Motor neuron (in vitro differentiated cells): ENCODE measurements at regions of chr11 and their contacts with region 1.

Region 1: GRCh38 chr11:101848262-101848661 is 66.5 kb upstream of the CEP126 start:
- ATAC-seq: no peak
- H3K4me3 ChIP-seq: no peak overlapping the region
- H3K27ac ChIP-seq: no peak overlapping the region
- H3K4me1 ChIP-seq: no peaks in the 10 kb centered on the region

Region 2: DNA sequence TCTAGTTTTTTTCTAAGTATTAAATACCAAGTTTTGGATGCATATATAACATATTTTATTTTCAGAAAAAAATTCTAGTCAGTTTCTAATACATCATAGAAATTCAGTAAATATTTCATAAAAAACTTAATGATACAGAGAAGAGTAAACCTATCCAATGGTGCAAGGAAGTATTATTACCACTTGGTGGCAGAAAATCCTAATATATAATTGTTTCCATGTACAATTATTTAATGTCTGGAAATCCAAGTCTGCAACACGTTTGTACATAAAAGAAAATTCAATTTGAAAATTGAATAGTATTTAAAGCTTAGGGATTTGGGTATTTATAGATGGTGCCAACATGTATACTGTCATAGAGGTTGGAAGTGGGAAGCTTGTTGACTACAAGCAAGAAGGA is 391.4 kb before region 1 on chr11:
- in situ Hi-C with region 1: loop called in 3 of 9 experiments (anchors 10 kb)
- ATAC-seq: peak in 3 of 8 experiments; percentile 45 to 72 (median 59)
- H3K4me3 ChIP-seq: no peak overlapping the region
- H3K27ac ChIP-seq: no peak overlapping the region
- H3K4me1 ChIP-seq: no peaks in the 10 kb centered on the region

Region 3: DNA sequence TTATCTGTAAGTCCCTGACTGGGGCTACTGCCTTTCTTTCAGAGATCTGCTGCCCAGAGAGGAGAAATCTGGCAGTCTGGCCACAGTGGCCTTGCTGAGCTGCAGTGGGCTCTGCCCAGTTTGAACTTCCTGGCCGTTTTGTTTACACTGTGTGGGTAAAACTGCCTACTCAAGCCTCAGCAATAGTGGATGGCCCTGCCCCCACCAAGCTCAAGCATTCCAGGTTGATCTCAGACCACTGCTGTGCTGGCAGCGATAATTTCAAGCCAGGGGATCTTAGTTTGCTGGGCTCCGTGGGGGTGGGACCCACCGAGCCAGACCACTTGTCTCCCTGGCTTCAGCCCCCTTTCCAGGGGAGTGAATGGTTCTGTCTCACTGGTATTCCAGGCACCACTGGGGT is 381.9 kb before region 1 on chr11:
- in situ Hi-C with region 1: loop called in 2 of 9 experiments (anchors 10 kb)
- ATAC-seq: no peak
- H3K4me3 ChIP-seq: no peak overlapping the region
- H3K27ac ChIP-seq: no peak overlapping the region
- H3K4me1 ChIP-seq: no peaks in the 10 kb centered on the region

Region 4: GRCh38 chr11:101478587-101479369 is 369.5 kb before region 1 on chr11:
- in situ Hi-C with region 1: loop called in 1 of 9 experiments (anchors 10 kb)
- ATAC-seq: no peak
- H3K4me3 ChIP-seq: no peak overlapping the region
- H3K27ac ChIP-seq: no peak overlapping the region
- H3K4me1 ChIP-seq: no peaks in the 10 kb centered on the region

Region 5: DNA sequence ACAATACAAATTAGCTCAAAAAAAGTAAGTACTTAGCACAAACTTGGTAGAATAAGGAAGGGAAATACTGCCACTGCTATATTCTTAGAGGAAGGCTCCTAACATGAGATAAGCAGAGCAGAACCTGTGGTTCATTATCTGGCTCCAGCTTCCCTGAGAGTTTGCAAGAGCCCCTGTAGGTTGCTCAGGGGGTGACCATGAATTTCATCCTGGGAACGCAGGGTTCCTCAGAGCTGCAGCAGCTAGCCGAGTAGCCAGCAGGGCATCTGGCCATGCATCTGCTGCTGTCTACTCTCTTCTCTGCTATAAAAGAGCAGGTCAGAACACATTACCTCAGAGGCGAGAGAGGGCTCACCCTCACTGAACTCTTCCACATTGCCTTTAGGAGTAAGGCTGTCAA is 331.7 kb before region 1 on chr11:
- in situ Hi-C with region 1: no loop called
- ATAC-seq: no peak
- H3K4me3 ChIP-seq: no peak overlapping the region
- H3K27ac ChIP-seq: no peak overlapping the region
- H3K4me1 ChIP-seq: no peaks in the 10 kb centered on the region

Region 6: GRCh38 chr11:101583251-101584128 is 264.8 kb before region 1 on chr11 and contains the start of gene TRPC6:
- in situ Hi-C with region 1: loop called in 1 of 9 experiments (anchors 25 kb)
- ATAC-seq: peak; percentile 71 to 83 (median 83)
- H3K4me3 ChIP-seq: peak within 1 kb of the TSS; percentile 36 to 49 (median 41)
- H3K27ac ChIP-seq: no peak within 1 kb of the TSS
- H3K4me1 ChIP-seq: no peaks in the 10 kb centered on the region
- total RNA-seq, gene TRPC6: 0.14 to 4.9 (median 0.49) TPM